Naive thymus-derived CD4-positive, alpha-beta T cell (primary cell): ENCODE measurements at regions of chr11 and their contacts with region 1.

Region 1: GRCh38 chr11:64742889-64743590 is 902 bp downstream of the RASGRP2 start:
- DNase-seq: peak; percentile 60 to 91 (median 78)
- ATAC-seq: peak; percentile 45
- H3K4me3 ChIP-seq: peak overlapping the region; percentile 98
- H3K4me3 Mint-ChIP-seq: peak overlapping the region in 9 of 10 donors; percentile 89 to 99 (median 97)
- H3K27ac ChIP-seq: peak overlapping the region; percentile 97
- H3K27ac Mint-ChIP-seq: peak overlapping the region in 5 of 9 donors; percentile 88 to 100 (median 98)
- H3K4me1 ChIP-seq: peaks cover 9 to 16% of the 10 kb centered on the region in 2 donors
- H3K4me1 Mint-ChIP-seq: peaks cover 18 to 47% (median 39%) of the 10 kb centered on the region in 7 donors
- H3K27me3 ChIP-seq: no peaks in the 10 kb centered on the region
- H3K27me3 Mint-ChIP-seq: no peaks in the 10 kb centered on the region

Region 2: DNA sequence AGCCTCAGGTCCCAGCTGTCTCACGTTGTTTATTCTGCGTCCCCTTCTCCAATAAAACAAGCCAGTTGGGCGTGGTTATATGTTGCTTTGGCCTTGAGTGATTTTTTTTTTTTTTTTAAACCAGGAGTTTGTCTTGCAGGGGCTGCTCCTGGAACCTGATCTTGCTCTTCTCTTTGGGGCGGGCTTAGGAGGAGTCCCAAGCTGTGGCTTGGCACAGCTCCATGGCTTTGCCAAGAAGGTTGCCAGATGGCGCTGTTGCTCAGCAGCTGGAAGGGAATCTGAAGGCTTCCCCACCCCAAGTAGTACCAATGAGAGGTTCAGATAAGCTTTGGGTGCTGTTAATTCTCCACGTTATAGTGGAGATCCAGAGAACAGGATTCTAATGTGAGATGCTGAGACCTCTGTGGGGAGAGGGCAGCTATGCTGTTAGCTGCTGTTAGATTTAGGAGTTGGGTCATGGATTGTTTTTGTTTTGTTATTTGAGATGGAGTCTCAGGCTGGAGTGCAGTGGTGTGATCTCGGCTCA is 538.5 kb before region 1 on chr11:
- CTCF ChIA-PET with region 1: no interaction called
- POLR2A ChIA-PET with region 1: no interaction called
- intact Hi-C with region 1: no loop called
- DNase-seq: peak; percentile 61 to 89 (median 83)
- ATAC-seq: peak; percentile 75
- H3K4me3 ChIP-seq: no peak overlapping the region
- H3K4me3 Mint-ChIP-seq: peak overlapping the region; percentile 27 to 87 (median 68)
- H3K27ac ChIP-seq: no peak overlapping the region
- H3K27ac Mint-ChIP-seq: peak overlapping the region; percentile 43 to 98 (median 86)
- H3K4me1 ChIP-seq: peaks cover 28 to 32% of the 10 kb centered on the region in 2 donors
- H3K4me1 Mint-ChIP-seq: peaks cover 25 to 51% (median 36%) of the 10 kb centered on the region in 7 donors
- H3K27me3 ChIP-seq: no peaks in the 10 kb centered on the region
- H3K27me3 Mint-ChIP-seq: no peaks in the 10 kb centered on the region

Region 3: DNA sequence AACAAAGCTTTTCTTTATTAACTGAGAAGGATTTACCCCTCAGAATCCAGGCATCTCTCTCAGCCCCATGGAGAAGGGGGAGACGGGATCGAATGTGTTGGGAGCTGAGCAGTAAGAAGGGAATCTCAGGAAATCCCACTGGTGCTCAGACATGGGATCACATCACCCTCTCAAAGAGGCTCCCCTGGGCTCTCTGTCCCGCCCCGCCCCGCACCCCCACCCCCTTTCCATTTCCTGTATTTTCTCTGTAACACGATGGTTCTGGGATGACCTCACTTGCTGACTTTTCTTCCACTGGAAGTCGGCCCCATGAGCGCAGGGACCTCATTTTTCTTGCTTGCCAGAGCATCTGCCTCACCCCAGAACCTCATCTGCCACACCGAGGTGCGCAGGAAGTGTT is 284.0 kb before region 1 on chr11:
- CTCF ChIA-PET with region 1: no interaction called
- POLR2A ChIA-PET with region 1: no interaction called
- intact Hi-C with region 1: no loop called
- DNase-seq: no peak
- ATAC-seq: no peak
- H3K4me3 ChIP-seq: no peak overlapping the region
- H3K4me3 Mint-ChIP-seq: no peak overlapping the region
- H3K27ac ChIP-seq: no peak overlapping the region
- H3K27ac Mint-ChIP-seq: no peak overlapping the region
- H3K4me1 ChIP-seq: no peaks in the 10 kb centered on the region
- H3K4me1 Mint-ChIP-seq: peaks cover 0 to 2% (median 0%) of the 10 kb centered on the region in 7 donors
- H3K27me3 ChIP-seq: no peaks in the 10 kb centered on the region
- H3K27me3 Mint-ChIP-seq: peaks cover 0 to 4% (median 0%) of the 10 kb centered on the region in 5 donors

Region 4: DNA sequence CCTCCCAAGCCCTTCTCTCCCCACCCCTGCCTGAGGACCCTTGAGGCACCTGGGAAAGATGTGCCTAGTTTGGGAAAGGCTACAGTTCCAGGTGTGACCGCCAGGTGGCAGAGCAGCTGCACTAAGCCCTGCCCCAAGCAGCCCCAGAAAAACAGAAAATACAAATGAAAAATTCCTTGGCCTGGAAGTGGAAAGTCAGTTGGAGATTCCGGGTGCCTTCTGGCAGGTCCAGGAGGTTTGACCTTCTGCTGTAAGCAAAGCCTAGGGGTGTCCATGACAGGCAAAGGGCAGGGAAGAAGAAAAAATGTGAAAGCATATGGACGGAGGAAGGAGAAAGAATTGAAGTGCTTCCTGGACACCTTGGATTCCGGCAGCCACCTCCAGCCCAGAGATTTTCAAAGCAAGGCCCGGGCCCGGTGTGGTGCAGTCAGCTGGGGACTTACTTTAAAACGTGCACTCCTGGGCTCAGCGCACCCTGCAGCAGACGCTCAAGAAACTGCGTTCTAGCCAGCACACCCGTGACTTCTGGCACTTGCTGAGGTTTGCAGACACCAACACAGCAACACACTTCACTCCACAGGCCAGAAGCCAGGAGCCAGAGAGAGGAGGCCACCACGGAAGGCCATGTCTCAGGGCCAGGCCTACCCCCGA is 189.4 kb before region 1 on chr11:
- CTCF ChIA-PET with region 1: no interaction called
- POLR2A ChIA-PET with region 1: no interaction called
- intact Hi-C with region 1: loop called in 1 of 2 experiments (anchors 1 kb)
- DNase-seq: peak; percentile 13 to 63 (median 37)
- ATAC-seq: peak; percentile 72
- H3K4me3 ChIP-seq: no peak overlapping the region
- H3K4me3 Mint-ChIP-seq: no peak overlapping the region
- H3K27ac ChIP-seq: no peak overlapping the region
- H3K27ac Mint-ChIP-seq: peak overlapping the region in 1 of 9 donors; percentile 64
- H3K4me1 ChIP-seq: no peaks in the 10 kb centered on the region
- H3K4me1 Mint-ChIP-seq: peaks cover 0 to 7% (median 0%) of the 10 kb centered on the region in 7 donors
- H3K27me3 ChIP-seq: no peaks in the 10 kb centered on the region
- H3K27me3 Mint-ChIP-seq: peaks cover 0 to 4% (median 0%) of the 10 kb centered on the region in 5 donors

Region 5: GRCh38 chr11:64723117-64723906 is 19.7 kb before region 1 on chr11 and contains the start of gene NRXN2:
- CTCF ChIA-PET with region 1: interaction called, 5 read pairs
- POLR2A ChIA-PET with region 1: interaction called, 6 read pairs
- intact Hi-C with region 1: loop called (anchors 1 kb)
- DNase-seq: peak; percentile 72 to 86 (median 80)
- ATAC-seq: peak; percentile 93
- H3K4me3 ChIP-seq: peak within 1 kb of the TSS; percentile 71
- H3K4me3 Mint-ChIP-seq: peak within 1 kb of the TSS; percentile 36 to 79 (median 66)
- H3K27ac ChIP-seq: peak within 1 kb of the TSS; percentile 81
- H3K27ac Mint-ChIP-seq: peak within 1 kb of the TSS in 8 of 9 donors; percentile 23 to 79 (median 62)
- H3K4me1 ChIP-seq: peaks cover 0 to 5% of the 10 kb centered on the region in 2 donors
- H3K4me1 Mint-ChIP-seq: peaks cover 0 to 22% (median 16%) of the 10 kb centered on the region in 7 donors
- H3K27me3 ChIP-seq: peaks cover 0 to 5% of the 10 kb centered on the region in 2 donors
- H3K27me3 Mint-ChIP-seq: peaks cover 10 to 42% (median 17%) of the 10 kb centered on the region in 5 donors
- total RNA-seq, gene NRXN2: 0.07 to 0.71 (median 0.27) TPM in 3 of 5 experiments, not detected in the others

Region 6: GRCh38 chr11:64787526-64788320 is 44.7 kb after region 1 on chr11:
- CTCF ChIA-PET with region 1: interaction called, 5 read pairs
- POLR2A ChIA-PET with region 1: interaction called, 31 read pairs
- intact Hi-C with region 1: no loop called
- DNase-seq: peak in 8 of 9 donors; percentile 28 to 65 (median 54)
- ATAC-seq: peak; percentile 90
- H3K4me3 ChIP-seq: no peak overlapping the region
- H3K4me3 Mint-ChIP-seq: no peak overlapping the region
- H3K27ac ChIP-seq: peak overlapping the region; percentile 16
- H3K27ac Mint-ChIP-seq: peak overlapping the region; percentile 18 to 90 (median 74)
- H3K4me1 ChIP-seq: peaks cover 0 to 7% of the 10 kb centered on the region in 2 donors
- H3K4me1 Mint-ChIP-seq: peaks cover 1 to 11% (median 5%) of the 10 kb centered on the region in 7 donors
- H3K27me3 ChIP-seq: no peaks in the 10 kb centered on the region
- H3K27me3 Mint-ChIP-seq: no peaks in the 10 kb centered on the region

Region 7: DNA sequence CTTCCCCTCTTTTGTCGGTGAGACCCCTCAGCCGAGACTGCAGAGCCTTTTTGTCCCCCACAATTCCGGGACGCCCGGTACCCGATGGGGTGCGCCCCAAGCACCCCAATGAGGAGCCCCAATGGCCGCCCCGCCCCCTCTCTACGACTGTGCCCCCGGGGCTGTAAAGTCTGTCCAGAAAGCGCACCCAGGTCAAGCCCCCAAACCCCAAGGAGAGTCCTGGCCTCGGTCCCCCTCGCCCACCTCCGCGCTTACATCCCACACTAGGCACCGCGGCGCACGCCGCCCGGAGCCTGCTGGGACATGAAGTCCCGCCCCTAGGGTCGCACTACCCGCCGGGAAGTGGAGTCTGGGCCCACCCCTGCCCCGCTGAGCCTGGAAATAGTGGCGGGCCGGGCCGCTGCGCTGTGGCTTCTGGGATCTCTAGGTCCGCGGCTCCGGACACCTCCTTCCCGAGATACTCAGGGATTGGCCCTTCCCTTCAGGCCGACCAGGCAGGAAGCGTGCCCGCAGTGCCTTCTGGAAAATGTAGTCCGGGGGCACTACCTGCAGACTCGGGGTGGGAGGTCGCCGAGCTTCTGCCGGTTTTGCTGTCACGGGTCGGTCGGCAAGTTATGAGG is 67.3 kb after region 1 on chr11 and contains the start of gene MEN1:
- CTCF ChIA-PET with region 1: no interaction called
- POLR2A ChIA-PET with region 1: interaction called, 43 read pairs
- intact Hi-C with region 1: loop called (anchors 1 to 2 kb)
- DNase-seq: peak; percentile 64 to 85 (median 81)
- ATAC-seq: peak; percentile 91
- H3K4me3 ChIP-seq: peak within 1 kb of the TSS; percentile 99
- H3K4me3 Mint-ChIP-seq: peak within 1 kb of the TSS; percentile 91 to 98 (median 96)
- H3K27ac ChIP-seq: peak within 1 kb of the TSS; percentile 97
- H3K27ac Mint-ChIP-seq: peak within 1 kb of the TSS; percentile 88 to 97 (median 94)
- H3K4me1 ChIP-seq: peaks cover 7 to 11% of the 10 kb centered on the region in 2 donors
- H3K4me1 Mint-ChIP-seq: peaks cover 23 to 34% (median 30%) of the 10 kb centered on the region in 7 donors
- H3K27me3 ChIP-seq: no peaks in the 10 kb centered on the region
- H3K27me3 Mint-ChIP-seq: peaks cover 0 to 6% (median 0%) of the 10 kb centered on the region in 5 donors
- total RNA-seq, gene MEN1: 25.7 to 46.4 (median 38.0) TPM

Region 8: GRCh38 chr11:64878494-64879243 is 135.6 kb after region 1 on chr11 and contains the start of gene EHD1:
- CTCF ChIA-PET with region 1: no interaction called
- POLR2A ChIA-PET with region 1: interaction called, 18 read pairs
- intact Hi-C with region 1: loop called in 1 of 2 experiments (anchors 2 kb)
- DNase-seq: peak; percentile 98 to 99 (median 99)
- ATAC-seq: peak; percentile 91
- H3K4me3 ChIP-seq: peak within 1 kb of the TSS; percentile 100
- H3K4me3 Mint-ChIP-seq: peak within 1 kb of the TSS; percentile 95 to 99 (median 98)
- H3K27ac ChIP-seq: peak within 1 kb of the TSS; percentile 81
- H3K27ac Mint-ChIP-seq: peak within 1 kb of the TSS; percentile 88 to 98 (median 94)
- H3K4me1 ChIP-seq: peaks cover 39 to 45% of the 10 kb centered on the region in 2 donors
- H3K4me1 Mint-ChIP-seq: peaks cover 49 to 65% (median 60%) of the 10 kb centered on the region in 7 donors
- H3K27me3 ChIP-seq: no peaks in the 10 kb centered on the region
- H3K27me3 Mint-ChIP-seq: no peaks in the 10 kb centered on the region
- total RNA-seq, gene EHD1: 124 to 263 (median 208) TPM

Region 9: GRCh38 chr11:65418711-65419459 is 675.8 kb after region 1 on chr11:
- CTCF ChIA-PET with region 1: no interaction called
- POLR2A ChIA-PET with region 1: interaction called, 12 read pairs
- intact Hi-C with region 1: no loop called
- DNase-seq: peak; percentile 33 to 89 (median 48)
- ATAC-seq: peak; percentile 51
- H3K4me3 ChIP-seq: peak overlapping the region; percentile 82
- H3K4me3 Mint-ChIP-seq: peak overlapping the region; percentile 92 to 100 (median 97)
- H3K27ac ChIP-seq: peak overlapping the region; percentile 98
- H3K27ac Mint-ChIP-seq: peak overlapping the region; percentile 97 to 100 (median 99)
- H3K4me1 ChIP-seq: peaks cover 36 to 46% of the 10 kb centered on the region in 2 donors
- H3K4me1 Mint-ChIP-seq: peaks cover 36 to 65% (median 45%) of the 10 kb centered on the region in 7 donors
- H3K27me3 ChIP-seq: no peaks in the 10 kb centered on the region
- H3K27me3 Mint-ChIP-seq: peaks cover 0 to 15% (median 0%) of the 10 kb centered on the region in 5 donors

Region 10: GRCh38 chr11:65663639-65664200 is 920.7 kb after region 1 on chr11:
- CTCF ChIA-PET with region 1: no interaction called
- POLR2A ChIA-PET with region 1: no interaction called
- intact Hi-C with region 1: no loop called
- DNase-seq: peak in 2 of 9 donors; percentile 26 to 43
- ATAC-seq: no peak
- H3K4me3 ChIP-seq: peak overlapping the region; percentile 85
- H3K4me3 Mint-ChIP-seq: peak overlapping the region; percentile 86 to 93 (median 90)
- H3K27ac ChIP-seq: peak overlapping the region; percentile 99
- H3K27ac Mint-ChIP-seq: peak overlapping the region; percentile 86 to 95 (median 92)
- H3K4me1 ChIP-seq: peaks cover 20 to 32% of the 10 kb centered on the region in 2 donors
- H3K4me1 Mint-ChIP-seq: peaks cover 10 to 43% (median 28%) of the 10 kb centered on the region in 7 donors
- H3K27me3 ChIP-seq: no peaks in the 10 kb centered on the region
- H3K27me3 Mint-ChIP-seq: no peaks in the 10 kb centered on the region